ENCODE measurements at regions of chr12 and their contacts with region 1.

Region 1: DNA sequence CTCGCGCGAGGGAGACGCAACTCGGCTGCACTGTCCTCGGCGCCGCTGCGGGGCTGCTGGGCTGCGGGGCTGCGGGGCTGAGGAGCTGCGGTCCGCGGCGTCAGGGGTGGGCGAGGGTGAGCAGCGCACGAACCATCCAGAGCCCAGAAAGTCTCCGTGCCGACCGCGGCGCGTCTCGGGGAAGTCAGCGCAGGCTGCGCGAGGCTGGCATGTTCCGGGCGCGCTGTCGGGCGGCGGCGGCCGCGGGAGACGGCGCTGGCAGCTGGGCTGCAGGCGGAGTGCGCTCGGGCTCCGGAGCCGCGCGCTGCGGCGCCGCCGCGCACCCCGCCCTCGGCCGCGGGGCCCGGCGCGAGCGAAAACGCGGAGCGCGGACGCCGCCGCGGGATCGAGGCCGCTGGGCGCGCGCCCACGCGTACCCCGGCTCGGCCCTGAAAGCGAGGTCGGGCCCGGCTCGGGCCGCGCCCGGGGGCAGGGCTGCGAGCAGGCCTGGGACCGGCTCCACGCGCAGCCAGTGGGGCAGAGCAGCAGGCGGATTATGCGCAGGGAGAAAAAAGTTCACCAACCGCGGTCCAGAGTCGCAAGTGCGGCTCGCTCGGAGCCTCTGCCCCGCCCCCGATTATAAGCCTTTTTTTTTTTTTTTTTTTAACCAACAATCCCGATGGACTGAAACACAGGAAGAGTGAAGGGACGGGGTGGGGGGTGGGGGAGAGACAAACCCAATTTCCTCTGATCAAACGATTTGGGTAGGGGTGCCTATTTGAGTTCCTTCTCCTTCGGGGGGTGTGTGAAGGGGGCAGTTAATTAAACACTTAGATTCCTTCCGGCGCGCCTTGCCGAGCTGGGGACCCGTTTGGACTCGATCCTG is at the start of gene PRICKLE1:
- DNase-seq: peak; percentile 74
- ATAC-seq: peak; percentile 87
- total RNA-seq, gene PRICKLE1: 14.5 TPM

Region 2: DNA sequence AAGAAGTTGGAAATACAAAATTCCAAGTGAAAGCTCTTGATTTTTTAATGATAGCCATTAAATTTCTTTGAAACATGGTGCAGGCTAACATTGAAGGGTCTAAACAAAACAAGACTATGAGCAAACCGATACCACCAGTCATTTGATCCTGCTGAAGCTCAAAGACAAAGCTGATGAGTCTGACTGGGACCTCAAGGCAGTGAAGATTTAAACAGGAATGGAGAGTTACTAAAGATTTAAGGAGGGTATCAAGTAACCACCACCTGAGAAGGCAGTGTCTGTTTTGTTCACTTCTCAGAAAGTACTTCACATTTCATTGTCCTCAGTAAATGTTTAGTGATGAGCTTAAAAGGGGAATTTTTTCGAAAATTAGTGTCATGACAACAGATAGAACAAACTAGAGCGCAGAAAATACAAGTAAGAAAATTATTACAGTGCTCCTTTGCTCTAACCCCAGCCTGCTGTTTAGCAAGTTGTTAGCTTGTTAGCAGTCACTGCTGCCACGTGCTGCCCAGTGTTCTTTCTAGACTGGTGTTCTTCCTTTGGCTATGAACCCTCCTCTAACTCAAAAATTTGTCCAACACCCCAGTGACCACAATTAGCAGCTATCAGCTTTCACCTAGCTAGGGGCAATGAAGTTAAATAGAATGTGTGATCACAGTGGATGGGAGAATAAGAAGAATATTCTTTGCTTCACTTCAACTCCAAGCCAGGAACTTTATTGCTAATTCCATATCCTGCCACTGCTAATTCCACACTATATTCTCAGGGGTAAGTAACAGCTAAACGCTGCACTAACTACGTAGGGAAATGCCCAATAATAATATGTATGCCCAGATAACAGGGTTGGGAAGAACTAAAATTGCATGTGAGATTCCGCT is 392.7 kb before region 1 on chr12:
- intact Hi-C with region 1: no loop called
- DNase-seq: no peak
- ATAC-seq: no peak

Region 3: GRCh38 chr12:42705863-42706262 is 116.2 kb after region 1 on chr12:
- intact Hi-C with region 1: loop called (anchors 10 kb)
- DNase-seq: peak; percentile 86
- ATAC-seq: peak; percentile 97

Region 4: DNA sequence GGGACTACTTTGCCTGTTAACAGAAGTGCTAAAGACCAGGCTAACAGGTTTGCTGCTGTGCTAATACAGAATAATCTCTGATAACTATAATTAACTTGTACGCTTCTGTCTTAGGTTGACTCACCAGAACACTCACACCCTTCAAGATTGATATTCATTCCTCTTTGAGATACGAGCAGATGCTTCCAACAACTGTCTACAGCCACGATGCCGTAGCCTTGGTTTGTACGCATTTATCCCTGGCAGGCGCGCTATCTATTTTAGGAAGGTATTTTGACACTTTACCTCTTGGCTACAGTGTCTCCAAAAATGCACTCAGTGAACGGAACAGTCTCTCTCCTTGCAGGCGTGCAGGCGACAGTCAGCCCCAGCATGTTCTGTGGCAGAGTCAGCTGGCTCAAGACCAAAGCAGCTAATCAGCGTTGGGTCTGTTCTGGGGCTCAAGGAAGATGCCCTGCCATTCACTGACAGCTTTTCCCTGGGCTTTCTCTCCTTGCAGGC is 146.2 kb after region 1 on chr12:
- intact Hi-C with region 1: loop called (anchors 5 kb)
- DNase-seq: peak; percentile 69
- ATAC-seq: peak; percentile 94

Region 5: DNA sequence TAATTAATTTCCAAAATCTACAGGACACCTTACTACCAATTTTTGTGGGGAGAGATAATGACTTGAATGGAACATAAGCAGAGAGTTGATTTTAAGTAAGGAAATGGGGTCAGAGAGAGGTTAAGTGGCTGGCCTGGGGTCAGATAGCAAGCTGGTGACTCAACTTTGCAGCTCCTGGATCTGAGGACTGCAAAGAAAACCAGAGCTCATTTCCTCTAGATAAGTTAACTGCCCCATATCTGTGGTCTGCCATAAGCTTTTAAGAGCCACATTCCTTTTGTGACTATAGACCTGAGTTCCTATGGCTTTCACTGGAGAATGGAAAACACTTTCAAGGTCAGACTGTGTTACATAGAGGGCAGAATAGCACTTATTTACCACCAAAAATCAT is 201.1 kb after region 1 on chr12:
- intact Hi-C with region 1: loop called (anchors 5 kb)
- DNase-seq: no peak
- ATAC-seq: no peak

Region 6: DNA sequence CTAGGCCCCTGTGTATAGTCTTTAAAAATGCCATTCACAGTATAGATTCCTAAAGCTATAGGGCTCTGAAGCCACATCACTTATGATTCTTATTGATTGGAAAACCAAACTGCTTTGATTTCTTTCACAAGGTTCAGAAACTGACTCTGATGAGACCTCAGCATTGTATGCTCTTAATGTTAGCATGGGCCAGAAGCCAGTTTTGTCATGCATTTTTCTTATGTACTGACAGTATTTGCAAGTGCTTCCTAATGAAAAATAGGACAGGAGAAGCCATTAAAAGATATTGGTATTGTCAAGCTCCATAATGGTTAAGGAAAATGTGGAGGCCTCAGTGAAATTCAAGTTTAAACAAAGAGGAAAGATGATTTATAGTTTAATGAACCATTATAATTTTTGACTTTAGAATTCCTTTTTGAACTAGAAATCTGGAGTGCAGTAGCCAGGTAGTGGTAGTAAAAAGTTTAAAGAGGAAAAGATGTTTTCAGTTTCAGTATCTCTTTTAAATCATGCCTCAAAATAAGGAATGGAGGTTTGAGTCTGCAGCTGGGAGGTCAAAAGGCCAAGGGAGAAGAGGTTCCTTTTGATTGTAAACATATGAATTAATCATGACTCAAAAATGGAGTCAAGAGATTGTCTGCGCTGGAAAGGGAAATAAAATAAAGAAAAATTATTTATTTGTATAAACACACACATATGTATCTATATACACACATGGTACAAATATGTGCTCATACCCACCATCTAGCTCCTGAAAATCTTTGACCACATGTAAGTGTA is 387.9 kb after region 1 on chr12:
- intact Hi-C with region 1: loop called (anchors 10 kb)
- DNase-seq: no peak
- ATAC-seq: no peak

Region 7: GRCh38 chr12:43282106-43282505 is 692.4 kb after region 1 on chr12:
- intact Hi-C with region 1: loop called (anchors 5 kb)
- DNase-seq: no peak
- ATAC-seq: no peak

Region 8: DNA sequence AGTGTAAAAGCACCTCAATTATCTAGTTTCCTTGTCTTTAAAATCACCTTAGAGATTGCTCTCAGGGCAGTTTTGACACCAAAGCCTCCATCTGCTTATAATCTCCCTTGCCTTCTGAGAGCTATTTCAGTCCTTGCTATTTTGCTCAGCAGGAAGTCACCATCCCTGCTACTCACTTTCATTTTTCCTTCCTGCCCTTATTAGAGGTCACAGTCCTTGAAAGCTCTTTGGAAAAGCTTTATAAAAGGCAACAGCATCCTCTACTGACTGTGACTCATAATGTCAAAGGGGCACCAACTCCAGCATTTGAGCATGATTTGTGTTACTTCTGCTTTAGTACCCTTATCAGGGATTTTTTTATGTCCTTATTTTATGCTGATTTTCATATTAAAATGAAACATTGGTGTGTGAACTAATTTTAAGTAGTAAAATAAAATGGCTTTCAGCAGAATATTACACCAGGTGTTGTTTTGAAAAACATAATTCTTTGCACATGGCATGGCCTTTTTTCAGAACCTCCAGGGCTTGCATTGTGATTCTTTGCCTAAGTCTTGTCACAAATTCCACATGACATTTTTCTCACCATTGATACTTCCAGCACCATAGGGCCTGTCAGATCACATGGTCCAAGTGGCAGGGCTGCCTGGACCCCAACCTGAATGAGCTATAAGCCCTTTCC is 749.3 kb after region 1 on chr12:
- intact Hi-C with region 1: loop called (anchors 5 kb)
- DNase-seq: no peak
- ATAC-seq: peak; percentile 92